Activated CD4-positive, alpha-beta memory T cell treated with anti-CD3 and anti-CD28 coated beads for 36 hours (primary cell): ENCODE measurements at regions of chr7 and their contacts with region 1.

Region 1: DNA sequence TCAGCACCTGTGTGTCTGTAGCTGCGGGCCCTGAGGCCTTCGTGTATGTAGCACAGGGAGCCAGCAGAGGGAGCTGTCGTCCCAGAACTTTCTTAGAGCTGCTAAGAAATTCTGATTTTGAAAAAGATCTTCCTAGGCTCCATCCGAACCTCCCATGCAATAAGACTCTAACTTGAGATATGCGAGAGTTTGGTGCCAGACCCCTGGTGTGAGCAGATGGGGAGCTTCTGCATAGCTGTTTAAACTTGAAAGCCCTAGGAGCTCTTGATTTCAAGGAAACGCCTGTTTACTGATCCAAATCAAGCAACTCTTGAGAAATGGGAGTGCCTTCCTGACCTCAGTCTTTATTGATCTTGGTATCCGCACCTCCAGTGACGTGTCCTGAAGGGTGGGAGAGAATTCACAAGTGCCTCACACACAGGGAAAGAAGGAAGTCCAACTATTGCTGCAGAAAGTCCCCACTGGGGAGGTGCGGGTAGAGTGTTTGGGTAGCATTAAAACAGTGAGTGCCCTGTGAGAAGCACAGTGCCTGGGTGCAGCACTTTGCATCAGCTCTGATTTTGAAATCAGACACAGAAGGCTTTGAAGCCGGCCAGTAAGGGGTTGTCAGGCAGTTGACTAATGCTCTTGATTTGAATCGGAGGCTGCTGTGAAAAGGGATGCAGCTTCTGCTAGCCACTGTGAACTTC is 66.4 kb upstream of the STRIP2 start:
- DNase-seq: peak; percentile 90
- H3K4me3 Mint-ChIP-seq: peak overlapping the region; percentile 52
- H3K27ac Mint-ChIP-seq: peak overlapping the region; percentile 84
- H3K4me1 Mint-ChIP-seq: peaks cover 39% of the 10 kb centered on the region
- H3K27me3 Mint-ChIP-seq: no peaks in the 10 kb centered on the region

Region 2: DNA sequence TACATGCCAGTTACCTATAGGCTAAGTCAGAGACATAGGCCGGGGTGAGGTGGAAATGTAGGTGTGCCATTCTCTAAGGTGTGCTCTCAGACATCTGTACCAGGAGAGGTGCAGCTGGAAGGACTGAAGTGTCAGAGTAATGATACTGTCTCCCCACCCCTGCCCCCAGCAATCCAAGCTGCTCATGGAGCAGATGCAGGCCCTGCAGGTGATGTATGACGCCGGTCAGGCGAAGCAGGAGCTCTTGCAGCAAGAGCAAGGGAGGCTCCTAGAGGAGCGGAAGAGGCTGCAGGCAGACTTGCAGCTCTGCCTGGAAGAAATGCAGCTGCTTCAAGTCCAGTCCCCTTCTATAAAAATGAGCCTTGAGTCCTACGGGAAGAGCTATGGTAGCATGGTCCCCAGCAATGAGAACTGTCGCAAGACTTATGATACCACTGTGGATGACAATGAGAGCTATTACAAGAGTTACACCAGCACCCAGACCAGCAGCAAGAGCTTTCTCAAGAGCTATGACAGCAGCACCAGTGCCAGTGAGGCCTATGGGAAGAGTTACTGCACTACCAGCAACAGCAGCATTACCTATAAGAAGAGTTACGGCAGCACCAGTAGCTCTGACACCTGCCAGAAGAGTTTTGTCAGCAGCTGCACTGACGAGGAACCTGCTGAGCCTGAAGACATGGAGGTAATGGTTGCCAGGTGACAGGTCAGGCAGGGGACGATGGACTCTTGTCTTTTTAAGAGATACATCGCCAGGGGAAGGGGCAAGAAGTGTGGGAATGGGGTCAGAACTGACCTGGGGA is 556.0 kb before region 1 on chr7:
- CTCF ChIA-PET with region 1: no interaction called
- POLR2A ChIA-PET with region 1: no interaction called
- intact Hi-C with region 1: no loop called
- DNase-seq: no peak
- H3K4me3 Mint-ChIP-seq: no peak overlapping the region
- H3K27ac Mint-ChIP-seq: no peak overlapping the region
- H3K4me1 Mint-ChIP-seq: no peaks in the 10 kb centered on the region
- H3K27me3 Mint-ChIP-seq: no peaks in the 10 kb centered on the region

Region 3: DNA sequence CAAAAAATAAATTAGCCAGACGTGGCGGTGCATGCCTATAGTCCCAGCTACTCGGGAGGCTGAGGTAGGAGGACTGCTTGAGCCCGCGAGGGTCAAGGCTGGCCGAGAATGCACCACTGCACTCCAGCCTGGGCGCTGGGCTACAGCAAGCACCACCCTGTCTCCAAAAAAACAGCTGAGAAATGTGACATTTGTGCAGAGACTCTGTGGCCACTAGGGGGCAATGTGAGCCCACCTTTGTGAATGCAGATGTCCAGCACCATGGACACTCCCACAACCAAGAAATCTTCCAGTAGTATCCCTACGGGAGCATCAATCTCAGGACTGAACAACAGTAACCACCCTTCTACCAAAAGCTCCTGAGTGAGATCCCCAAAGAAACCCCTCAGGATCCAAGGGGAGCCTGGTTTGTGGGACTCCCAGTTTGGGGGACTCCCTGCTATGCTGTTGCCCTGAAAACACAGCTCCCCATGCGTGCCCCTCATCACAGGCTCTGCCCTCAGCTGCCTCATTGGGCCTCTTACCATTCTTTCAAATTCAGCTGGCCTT is 149.3 kb before region 1 on chr7:
- CTCF ChIA-PET with region 1: interaction called, 24 read pairs
- POLR2A ChIA-PET with region 1: no interaction called
- intact Hi-C with region 1: no loop called
- DNase-seq: peak; percentile 85
- H3K4me3 Mint-ChIP-seq: no peak overlapping the region
- H3K27ac Mint-ChIP-seq: no peak overlapping the region
- H3K4me1 Mint-ChIP-seq: peaks cover 9% of the 10 kb centered on the region
- H3K27me3 Mint-ChIP-seq: peaks cover 3% of the 10 kb centered on the region

Region 4: GRCh38 chr7:129356176-129356575 is 11.7 kb before region 1 on chr7:
- CTCF ChIA-PET with region 1: interaction called, 25 read pairs
- POLR2A ChIA-PET with region 1: no interaction called
- intact Hi-C with region 1: no loop called
- DNase-seq: no peak
- H3K4me3 Mint-ChIP-seq: no peak overlapping the region
- H3K27ac Mint-ChIP-seq: no peak overlapping the region
- H3K4me1 Mint-ChIP-seq: peaks cover 6% of the 10 kb centered on the region
- H3K27me3 Mint-ChIP-seq: no peaks in the 10 kb centered on the region

Region 5: GRCh38 chr7:129401967-129402860 is 34.4 kb after region 1 on chr7:
- CTCF ChIA-PET with region 1: interaction called, 14 read pairs
- POLR2A ChIA-PET with region 1: interaction called, 3 read pairs
- intact Hi-C with region 1: loop called (anchors 2 kb)
- DNase-seq: peak; percentile 56
- H3K4me3 Mint-ChIP-seq: no peak overlapping the region
- H3K27ac Mint-ChIP-seq: peak overlapping the region; percentile 29
- H3K4me1 Mint-ChIP-seq: peaks cover 37% of the 10 kb centered on the region
- H3K27me3 Mint-ChIP-seq: no peaks in the 10 kb centered on the region

Region 6: GRCh38 chr7:129530795-129531391 is 163.0 kb after region 1 on chr7:
- CTCF ChIA-PET with region 1: interaction called, 4 read pairs
- POLR2A ChIA-PET with region 1: no interaction called
- intact Hi-C with region 1: loop called (anchors 1 kb)
- DNase-seq: peak; percentile 86
- H3K4me3 Mint-ChIP-seq: no peak overlapping the region
- H3K27ac Mint-ChIP-seq: peak overlapping the region; percentile 19
- H3K4me1 Mint-ChIP-seq: peaks cover 9% of the 10 kb centered on the region
- H3K27me3 Mint-ChIP-seq: peaks cover 11% of the 10 kb centered on the region

Region 7: DNA sequence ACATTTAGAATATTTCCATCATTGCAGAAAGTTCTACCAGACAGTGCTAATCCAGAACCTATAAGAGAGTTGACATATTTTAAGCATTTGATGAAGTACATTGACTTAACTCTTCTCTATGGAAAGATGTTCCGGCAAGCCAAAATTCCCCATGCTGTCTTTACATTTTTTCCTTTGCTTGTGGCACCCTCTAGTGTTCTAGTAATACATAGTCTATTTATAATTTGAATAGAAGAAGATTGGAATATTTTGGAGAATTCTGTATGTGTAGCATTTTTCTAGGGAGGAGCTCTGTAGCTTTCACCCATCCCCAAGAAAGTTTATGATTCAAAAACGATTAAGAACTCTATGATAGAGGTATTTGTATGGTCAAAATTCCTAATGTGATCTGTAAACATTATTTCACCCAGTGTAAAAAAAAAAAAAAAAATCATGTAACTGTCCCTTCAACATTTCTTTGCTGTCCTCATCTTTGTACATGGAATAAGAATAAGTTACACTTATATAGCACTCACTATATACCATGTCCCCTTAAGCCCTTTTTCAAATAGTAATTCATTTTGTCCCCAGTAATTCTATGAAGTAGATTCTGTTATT is 276.9 kb after region 1 on chr7:
- CTCF ChIA-PET with region 1: interaction called, 11 read pairs
- POLR2A ChIA-PET with region 1: no interaction called
- intact Hi-C with region 1: no loop called
- DNase-seq: no peak
- H3K4me3 Mint-ChIP-seq: no peak overlapping the region
- H3K27ac Mint-ChIP-seq: no peak overlapping the region
- H3K4me1 Mint-ChIP-seq: peaks cover 17% of the 10 kb centered on the region
- H3K27me3 Mint-ChIP-seq: no peaks in the 10 kb centered on the region